Calu3 (cell line): ENCODE measurements at regions of chr4 and their contacts with region 1.

Region 1: GRCh38 chr4:81040012-81040659 is 9.6 kb downstream of the BMP3 start:
- DNase-seq: no peak
- H3K4me3 Mint-ChIP-seq: no peak overlapping the region
- H3K27ac Mint-ChIP-seq: peak overlapping the region; percentile 28
- H3K4me1 Mint-ChIP-seq: peaks cover 18% of the 10 kb centered on the region
- H3K27me3 Mint-ChIP-seq: no peaks in the 10 kb centered on the region
- CTCF ChIP-seq: peak; percentile 26

Region 2: GRCh38 chr4:80365928-80366327 is 674.2 kb before region 1 on chr4:
- CTCF ChIA-PET with region 1: interaction called, 26 read pairs
- intact Hi-C with region 1: loop called (anchors 1 kb)
- DNase-seq: peak; percentile 52
- H3K4me3 Mint-ChIP-seq: no peak overlapping the region
- H3K27ac Mint-ChIP-seq: no peak overlapping the region
- H3K4me1 Mint-ChIP-seq: peaks cover 8% of the 10 kb centered on the region
- H3K27me3 Mint-ChIP-seq: no peaks in the 10 kb centered on the region
- CTCF ChIP-seq: peak; percentile 33

Region 3: GRCh38 chr4:80462621-80463091 is 577.5 kb before region 1 on chr4:
- CTCF ChIA-PET with region 1: no interaction called
- intact Hi-C with region 1: loop called (anchors 5 kb)
- DNase-seq: no peak
- H3K4me3 Mint-ChIP-seq: no peak overlapping the region
- H3K27ac Mint-ChIP-seq: no peak overlapping the region
- H3K4me1 Mint-ChIP-seq: peaks cover 20% of the 10 kb centered on the region
- H3K27me3 Mint-ChIP-seq: no peaks in the 10 kb centered on the region
- CTCF ChIP-seq: no peak

Region 4: GRCh38 chr4:80540785-80541469 is 499.2 kb before region 1 on chr4:
- CTCF ChIA-PET with region 1: no interaction called
- intact Hi-C with region 1: no loop called
- DNase-seq: no peak
- H3K4me3 Mint-ChIP-seq: no peak overlapping the region
- H3K27ac Mint-ChIP-seq: no peak overlapping the region
- H3K4me1 Mint-ChIP-seq: no peaks in the 10 kb centered on the region
- H3K27me3 Mint-ChIP-seq: no peaks in the 10 kb centered on the region
- CTCF ChIP-seq: no peak

Region 5: DNA sequence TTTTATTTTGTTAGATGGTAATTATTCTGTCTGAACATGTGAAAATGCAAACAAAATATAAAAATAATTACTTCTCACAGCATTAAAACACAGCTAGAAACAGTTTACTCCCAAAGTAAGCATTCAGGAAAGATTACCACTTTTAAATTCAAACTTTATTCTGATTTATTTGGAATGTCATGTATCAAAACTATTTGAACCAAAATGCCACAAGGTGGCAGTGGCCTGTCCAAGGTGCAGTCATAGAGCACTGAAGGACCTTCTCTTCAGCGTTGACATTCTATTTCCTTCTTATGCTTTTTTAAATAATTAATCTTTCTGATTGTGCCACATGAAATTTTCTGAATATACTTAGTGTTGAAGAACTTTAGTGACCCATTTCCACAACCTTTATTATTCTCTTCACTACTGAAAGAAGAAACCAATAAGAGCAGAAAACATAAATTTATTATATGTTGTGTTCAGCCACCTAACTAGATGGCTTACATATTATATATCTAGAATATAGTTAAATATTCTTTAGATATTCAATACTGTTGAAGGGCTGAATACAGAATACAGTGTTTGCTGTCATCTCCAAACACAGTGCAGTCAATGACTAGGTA is 421.0 kb before region 1 on chr4:
- CTCF ChIA-PET with region 1: no interaction called
- intact Hi-C with region 1: loop called (anchors 5 kb)
- DNase-seq: peak; percentile 5
- H3K4me3 Mint-ChIP-seq: no peak overlapping the region
- H3K27ac Mint-ChIP-seq: no peak overlapping the region
- H3K4me1 Mint-ChIP-seq: no peaks in the 10 kb centered on the region
- H3K27me3 Mint-ChIP-seq: no peaks in the 10 kb centered on the region
- CTCF ChIP-seq: peak; percentile 12

Region 6: GRCh38 chr4:80989921-80990544 is 50.1 kb before region 1 on chr4:
- CTCF ChIA-PET with region 1: interaction called, 6 read pairs
- intact Hi-C with region 1: loop called (anchors 5 kb)
- DNase-seq: peak; percentile 44
- H3K4me3 Mint-ChIP-seq: no peak overlapping the region
- H3K27ac Mint-ChIP-seq: no peak overlapping the region
- H3K4me1 Mint-ChIP-seq: no peaks in the 10 kb centered on the region
- H3K27me3 Mint-ChIP-seq: no peaks in the 10 kb centered on the region
- CTCF ChIP-seq: peak; percentile 51

Region 7: DNA sequence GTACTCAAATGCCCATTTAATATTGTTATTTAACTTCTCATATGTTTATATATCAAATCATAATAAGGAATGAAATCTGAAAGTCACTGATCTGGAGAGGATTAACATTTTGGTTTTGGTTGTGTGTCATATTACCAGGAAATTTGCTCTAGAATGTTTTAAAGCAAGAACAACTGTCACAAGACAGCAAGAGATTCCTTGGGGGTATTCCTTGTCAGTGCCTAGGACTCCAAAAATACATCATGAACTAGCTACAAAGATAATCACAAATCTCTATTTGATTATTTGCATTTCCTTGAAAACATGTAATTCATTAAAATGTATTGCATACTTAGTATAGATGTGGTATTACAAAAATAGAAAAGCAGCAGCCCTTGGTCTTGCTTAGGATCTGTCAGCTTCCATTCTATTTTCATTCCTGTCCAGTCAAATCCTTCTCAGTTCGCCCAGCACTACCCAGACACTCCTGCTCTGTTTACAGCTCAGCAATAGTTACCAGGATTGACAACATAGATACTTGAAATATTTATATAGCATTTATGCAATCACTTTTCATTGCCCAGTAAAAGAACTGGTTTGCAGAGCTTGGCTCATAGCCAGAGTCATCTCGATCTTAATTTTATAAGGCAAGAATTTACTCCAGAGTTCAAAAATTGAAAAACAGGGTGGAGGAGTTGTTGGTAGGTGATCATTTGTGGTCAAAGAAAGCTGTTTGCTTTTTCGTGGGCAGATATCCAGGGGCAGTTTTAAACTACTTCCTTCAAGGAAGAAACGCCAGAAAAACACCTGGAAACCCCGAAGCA is 18.8 kb before region 1 on chr4:
- CTCF ChIA-PET with region 1: interaction called, 11 read pairs
- intact Hi-C with region 1: no loop called
- DNase-seq: peak; percentile 52
- H3K4me3 Mint-ChIP-seq: no peak overlapping the region
- H3K27ac Mint-ChIP-seq: peak overlapping the region; percentile 32
- H3K4me1 Mint-ChIP-seq: peaks cover 12% of the 10 kb centered on the region
- H3K27me3 Mint-ChIP-seq: peaks cover 9% of the 10 kb centered on the region
- CTCF ChIP-seq: no peak

Region 8: DNA sequence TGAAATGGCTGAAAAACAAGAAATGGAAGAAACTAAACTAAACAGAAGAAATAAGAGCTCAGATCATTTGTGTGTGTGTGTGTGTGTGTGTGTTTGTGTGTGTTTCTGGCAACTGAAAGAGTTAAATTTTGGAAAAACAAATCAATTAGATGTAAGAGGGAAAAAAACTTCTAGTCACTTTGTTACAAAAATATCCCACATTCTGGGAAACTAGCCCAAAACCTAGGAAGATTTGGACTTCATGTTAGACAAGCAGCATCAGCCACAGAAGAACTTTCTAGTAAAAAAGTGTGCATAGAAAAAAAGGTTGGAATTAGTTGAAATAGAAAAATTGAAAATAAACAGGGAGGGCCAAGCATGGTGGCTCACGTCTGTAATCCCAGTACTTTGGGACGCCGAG is 286.4 kb after region 1 on chr4:
- CTCF ChIA-PET with region 1: no interaction called
- intact Hi-C with region 1: no loop called
- DNase-seq: no peak
- H3K4me3 Mint-ChIP-seq: no peak overlapping the region
- H3K27ac Mint-ChIP-seq: no peak overlapping the region
- H3K4me1 Mint-ChIP-seq: no peaks in the 10 kb centered on the region
- H3K27me3 Mint-ChIP-seq: no peaks in the 10 kb centered on the region
- CTCF ChIP-seq: no peak